GM12878 (cell line): ENCODE measurements at regions of chrX and their contacts with region 1.

Region 1: DNA sequence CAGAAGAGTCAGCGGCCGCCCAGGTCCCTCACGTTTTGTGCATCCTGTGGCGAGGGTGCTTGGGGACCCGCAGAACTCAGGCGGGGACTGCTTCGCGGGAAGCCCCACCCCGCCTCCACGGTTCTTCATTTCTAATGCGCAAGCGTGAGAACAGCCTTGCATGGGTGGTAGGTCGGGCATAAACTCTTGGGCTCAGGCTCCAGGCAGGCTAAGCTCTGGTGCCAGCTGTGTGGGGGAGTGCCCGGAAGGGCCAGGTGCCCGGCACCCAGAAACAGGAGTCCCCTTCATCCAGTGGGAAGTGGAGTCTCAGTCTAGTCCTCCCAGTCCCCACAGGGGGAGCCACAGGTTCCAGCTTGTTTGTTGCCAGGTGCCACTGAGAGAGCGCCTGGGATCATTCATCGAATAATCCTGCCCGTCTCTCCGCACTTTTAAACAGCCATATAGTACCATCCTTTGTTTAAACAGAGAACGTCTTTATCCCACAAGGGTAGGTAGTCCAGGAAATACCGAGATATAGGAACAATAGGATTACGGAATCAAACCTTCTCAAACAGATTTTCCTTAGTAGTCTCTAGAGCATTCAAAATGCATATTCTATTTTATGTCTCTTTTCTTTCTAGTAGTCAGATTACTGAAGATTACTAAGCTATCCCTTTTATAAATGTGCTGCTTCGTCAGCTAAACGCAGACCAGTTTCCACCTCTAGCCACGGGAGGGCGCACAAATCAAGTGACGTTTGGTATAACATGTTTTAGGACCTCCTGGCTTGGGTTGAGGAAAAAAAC is 12.7 kb upstream of the RBBP7 start:
- DNase-seq: peak; percentile 37
- ATAC-seq: peak; percentile 90
- H3K4me3 ChIP-seq: peak overlapping the region; percentile 40
- H3K27ac ChIP-seq: peak overlapping the region; percentile 46; the same call in 1 of the 2 replicates
- H3K4me1 ChIP-seq: no peaks in the 10 kb centered on the region
- H3K27me3 ChIP-seq: peaks cover 0 to 4% of the 10 kb centered on the region in 2 experiments; a peak in 1 of 4 replicates
- CTCF ChIP-seq: peak; percentile 70 to 75 (median 74)
- EP300 ChIP-seq: no peak
- POLR2A ChIP-seq: no peak
- RAD21 ChIP-seq: peak; percentile 77

Region 2: GRCh38 chrX:16826207-16826606 is 56.7 kb before region 1 on chrX:
- CTCF ChIA-PET with region 1: interaction called, 25 read pairs
- POLR2A ChIA-PET with region 1: no interaction called
- RAD21 ChIA-PET with region 1: interaction called, 6 read pairs
- SMC1A ChIA-PET with region 1: interaction called, 27 read pairs
- in situ Hi-C with region 1: no loop called
- intact Hi-C with region 1: no loop called
- DNase-seq: no peak
- ATAC-seq: peak; percentile 76
- H3K4me3 ChIP-seq: no peak overlapping the region
- H3K27ac ChIP-seq: no peak overlapping the region
- H3K4me1 ChIP-seq: no peaks in the 10 kb centered on the region
- H3K27me3 ChIP-seq: no peaks in the 10 kb centered on the region
- CTCF ChIP-seq: peak; percentile 37 to 68 (median 60); a peak in 5 of 6 replicates
- EP300 ChIP-seq: no peak
- POLR2A ChIP-seq: no peak
- RAD21 ChIP-seq: peak; percentile 65

Region 3: GRCh38 chrX:16852617-16853179 is 30.2 kb before region 1 on chrX:
- CTCF ChIA-PET with region 1: interaction called, 16 read pairs
- POLR2A ChIA-PET with region 1: no interaction called
- RAD21 ChIA-PET with region 1: interaction called, 5 read pairs
- SMC1A ChIA-PET with region 1: interaction called, 3 read pairs
- in situ Hi-C with region 1: no loop called
- intact Hi-C with region 1: no loop called
- DNase-seq: no peak
- ATAC-seq: peak; percentile 60
- H3K4me3 ChIP-seq: no peak overlapping the region
- H3K27ac ChIP-seq: no peak overlapping the region
- H3K4me1 ChIP-seq: no peaks in the 10 kb centered on the region
- H3K27me3 ChIP-seq: no peaks in the 10 kb centered on the region
- CTCF ChIP-seq: no peak
- EP300 ChIP-seq: no peak
- POLR2A ChIP-seq: no peak
- RAD21 ChIP-seq: no peak

Region 4: DNA sequence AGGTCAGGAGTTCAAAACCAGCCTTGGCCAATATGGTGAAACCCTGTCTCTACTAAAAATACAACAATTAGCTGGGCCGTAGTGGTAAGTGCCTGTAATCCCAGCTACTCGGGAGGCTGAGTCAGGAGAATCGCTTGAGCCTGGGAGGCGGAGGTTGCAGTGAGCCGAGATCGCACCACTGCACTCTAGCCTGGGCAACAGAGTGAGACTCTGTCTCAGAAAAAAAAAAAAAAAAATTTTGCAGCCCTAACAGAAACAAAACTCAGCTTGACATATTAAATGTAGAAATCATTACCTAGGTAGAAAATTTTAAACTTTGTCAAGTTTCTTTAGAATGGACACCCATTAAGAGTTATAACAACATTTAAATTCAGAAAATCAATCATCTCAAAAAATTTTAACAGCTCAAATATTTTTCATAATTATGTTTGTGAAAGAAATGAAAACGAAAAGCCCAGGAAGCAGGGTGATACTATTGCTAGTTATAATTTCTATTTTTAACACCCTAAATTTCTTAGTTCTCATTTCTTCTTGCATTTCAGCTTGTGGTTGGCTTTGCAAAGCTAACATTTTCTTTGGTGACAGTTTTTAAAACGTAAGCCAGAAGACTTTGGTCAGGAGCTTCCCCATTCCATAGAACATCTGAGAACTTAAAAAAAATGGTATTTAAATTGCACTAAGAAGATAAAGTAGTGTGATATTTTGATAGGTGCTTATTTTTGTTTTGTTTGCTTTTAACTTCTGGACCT is 20.6 kb after region 1 on chrX:
- CTCF ChIA-PET with region 1: interaction called, 40 read pairs
- POLR2A ChIA-PET with region 1: interaction called, 5 read pairs
- RAD21 ChIA-PET with region 1: interaction called, 20 read pairs
- SMC1A ChIA-PET with region 1: interaction called, 9 read pairs
- in situ Hi-C with region 1: no loop called
- intact Hi-C with region 1: no loop called
- DNase-seq: peak; percentile 15
- ATAC-seq: peak; percentile 84
- H3K4me3 ChIP-seq: no peak overlapping the region
- H3K27ac ChIP-seq: peak overlapping the region; percentile 74
- H3K4me1 ChIP-seq: peaks cover 8% of the 10 kb centered on the region
- H3K27me3 ChIP-seq: no peaks in the 10 kb centered on the region
- CTCF ChIP-seq: no peak
- EP300 ChIP-seq: peak; percentile 30 to 36; a peak in 1 of 4 replicates
- POLR2A ChIP-seq: no peak
- RAD21 ChIP-seq: no peak

Region 5: GRCh38 chrX:17007206-17007683 is 124.4 kb after region 1 on chrX:
- CTCF ChIA-PET with region 1: interaction called, 25 read pairs
- POLR2A ChIA-PET with region 1: no interaction called
- RAD21 ChIA-PET with region 1: interaction called, 4 read pairs
- SMC1A ChIA-PET with region 1: interaction called, 18 read pairs
- in situ Hi-C with region 1: no loop called
- intact Hi-C with region 1: no loop called
- DNase-seq: no peak
- ATAC-seq: peak; percentile 91
- H3K4me3 ChIP-seq: no peak overlapping the region
- H3K27ac ChIP-seq: no peak overlapping the region
- H3K4me1 ChIP-seq: no peaks in the 10 kb centered on the region
- H3K27me3 ChIP-seq: peaks cover 0 to 3% of the 10 kb centered on the region in 2 experiments; a peak in 1 of 4 replicates
- CTCF ChIP-seq: peak; percentile 36 to 48 (median 47); a peak in 4 of 6 replicates
- EP300 ChIP-seq: no peak
- POLR2A ChIP-seq: no peak
- RAD21 ChIP-seq: peak; percentile 40; the same call in 1 of the 2 replicates

Region 6: GRCh38 chrX:17038681-17039161 is 155.8 kb after region 1 on chrX:
- CTCF ChIA-PET with region 1: interaction called, 205 read pairs
- POLR2A ChIA-PET with region 1: interaction called, 5 read pairs
- RAD21 ChIA-PET with region 1: interaction called, 16 read pairs
- SMC1A ChIA-PET with region 1: interaction called, 109 read pairs
- in situ Hi-C with region 1: no loop called
- intact Hi-C with region 1: no loop called
- DNase-seq: no peak
- ATAC-seq: peak; percentile 89
- H3K4me3 ChIP-seq: no peak overlapping the region
- H3K27ac ChIP-seq: no peak overlapping the region
- H3K4me1 ChIP-seq: no peaks in the 10 kb centered on the region
- H3K27me3 ChIP-seq: 0 out of 4 replicates have a peak, but pooled peaks cover 0 to 2% of the 10 kb centered on the region in 2 experiments
- CTCF ChIP-seq: no peak
- EP300 ChIP-seq: no peak
- POLR2A ChIP-seq: no peak
- RAD21 ChIP-seq: no peak

Region 7: DNA sequence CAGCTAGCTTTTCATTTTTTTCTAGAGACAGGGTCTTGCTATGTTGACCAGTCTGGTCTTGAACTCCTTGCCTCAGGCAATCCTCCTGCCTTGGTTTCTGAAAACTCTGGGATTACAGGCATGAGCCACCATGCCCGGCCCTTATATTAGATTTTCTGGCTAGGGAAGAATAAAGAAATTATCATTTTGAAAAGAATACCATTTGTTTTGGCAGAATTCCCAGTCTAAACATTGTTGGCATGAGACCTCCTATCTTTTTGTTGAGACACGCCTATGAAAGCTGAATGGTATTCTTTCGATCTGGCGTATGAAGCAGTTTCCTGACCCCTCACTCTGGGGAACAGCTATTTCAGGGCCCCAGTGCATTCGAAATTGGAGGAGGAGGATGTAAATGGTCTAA is 170.6 kb after region 1 on chrX:
- CTCF ChIA-PET with region 1: interaction called, 205 read pairs
- POLR2A ChIA-PET with region 1: no interaction called
- RAD21 ChIA-PET with region 1: interaction called, 3 read pairs
- SMC1A ChIA-PET with region 1: interaction called, 109 read pairs
- in situ Hi-C with region 1: no loop called
- intact Hi-C with region 1: no loop called
- DNase-seq: no peak
- ATAC-seq: no peak
- H3K4me3 ChIP-seq: no peak overlapping the region
- H3K27ac ChIP-seq: no peak overlapping the region
- H3K4me1 ChIP-seq: no peaks in the 10 kb centered on the region
- H3K27me3 ChIP-seq: 0 out of 4 replicates have a peak, but pooled peaks cover 0 to 2% of the 10 kb centered on the region in 2 experiments
- CTCF ChIP-seq: no peak
- EP300 ChIP-seq: no peak
- POLR2A ChIP-seq: no peak
- RAD21 ChIP-seq: no peak